Mammary epithelial cell (primary cell): ENCODE measurements at regions of chr2 and their contacts with region 1.

Region 1: DNA sequence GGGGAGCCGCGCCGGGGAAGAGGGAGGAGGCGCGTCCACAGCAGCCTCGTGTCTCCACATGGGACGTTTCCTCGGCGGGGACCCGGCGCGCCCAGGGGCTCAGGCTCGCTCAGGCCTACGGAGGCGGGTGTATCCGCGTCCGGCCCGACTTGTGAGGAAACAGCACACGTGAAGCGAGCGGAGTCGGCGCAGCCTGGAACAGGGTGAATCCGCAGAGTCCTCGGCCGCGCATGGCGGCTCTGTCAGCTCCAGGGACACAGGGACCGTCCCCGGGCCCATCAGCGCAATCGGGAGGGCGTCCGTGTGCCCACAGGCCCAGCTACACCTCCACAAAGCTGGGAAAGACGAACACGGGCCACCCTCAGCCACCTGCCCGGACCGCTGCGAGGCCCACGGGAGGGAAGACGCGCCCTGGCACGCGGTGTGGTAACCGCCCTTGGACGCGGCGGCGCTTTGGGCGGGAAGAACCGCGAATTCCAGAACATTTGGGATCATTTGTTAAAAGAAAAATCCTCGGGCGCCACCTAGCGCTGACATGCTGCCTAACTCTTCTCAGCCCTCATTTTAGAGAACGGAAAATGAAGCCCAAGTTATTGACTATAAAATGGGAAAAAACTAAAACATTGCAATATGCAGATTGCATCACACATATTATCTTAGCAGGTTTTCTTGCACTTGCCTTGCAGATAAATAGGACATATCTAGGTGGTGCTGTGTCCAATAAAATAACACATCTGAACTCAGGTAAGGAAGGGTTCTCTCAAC is 40.4 kb downstream of the TMEM18 start:
- DNase-seq: peak; percentile 44
- H3K4me3 ChIP-seq: no peak overlapping the region
- H3K27ac ChIP-seq: no peak overlapping the region
- H3K4me1 ChIP-seq: no peaks in the 10 kb centered on the region
- H3K27me3 ChIP-seq: no peaks in the 10 kb centered on the region
- CTCF ChIP-seq: peak; percentile 67 to 68

Region 2: GRCh38 chr2:246489-247144 is 390.2 kb before region 1 on chr2:
- CTCF ChIA-PET with region 1: no interaction called
- dilution Hi-C with region 1: no loop called
- in situ Hi-C with region 1: no loop called
- intact Hi-C with region 1: loop called (anchors 2 kb)
- DNase-seq: peak; percentile 33
- H3K4me3 ChIP-seq: no peak overlapping the region
- H3K27ac ChIP-seq: no peak overlapping the region
- H3K4me1 ChIP-seq: no peaks in the 10 kb centered on the region
- H3K27me3 ChIP-seq: no peaks in the 10 kb centered on the region
- CTCF ChIP-seq: peak; percentile 36 to 64

Region 3: GRCh38 chr2:584863-585823 is 51.7 kb before region 1 on chr2:
- CTCF ChIA-PET with region 1: no interaction called
- dilution Hi-C with region 1: no loop called
- in situ Hi-C with region 1: no loop called
- intact Hi-C with region 1: no loop called
- DNase-seq: no peak
- H3K4me3 ChIP-seq: no peak overlapping the region
- H3K27ac ChIP-seq: no peak overlapping the region
- H3K4me1 ChIP-seq: no peaks in the 10 kb centered on the region
- H3K27me3 ChIP-seq: no peaks in the 10 kb centered on the region
- CTCF ChIP-seq: no peak